Pancreas (tissue), 10 donors: ENCODE measurements at regions of chr17 and their contacts with region 1.

Region 1: GRCh38 chr17:77542551-77543490 is 402.1 kb downstream of the SEC14L1 start:
- DNase-seq: peak; percentile 38 to 79 (median 60)
- ATAC-seq: peak; percentile 68 to 98 (median 96)
- H3K4me3 ChIP-seq: no peak overlapping the region
- H3K27ac ChIP-seq: no peak overlapping the region
- H3K4me1 ChIP-seq: no peaks in the 10 kb centered on the region
- H3K27me3 ChIP-seq: peaks cover 0 to 17% (median 0%) of the 10 kb centered on the region in 4 donors
- CTCF ChIP-seq: peak; percentile 34 to 74 (median 61)

Region 2: DNA sequence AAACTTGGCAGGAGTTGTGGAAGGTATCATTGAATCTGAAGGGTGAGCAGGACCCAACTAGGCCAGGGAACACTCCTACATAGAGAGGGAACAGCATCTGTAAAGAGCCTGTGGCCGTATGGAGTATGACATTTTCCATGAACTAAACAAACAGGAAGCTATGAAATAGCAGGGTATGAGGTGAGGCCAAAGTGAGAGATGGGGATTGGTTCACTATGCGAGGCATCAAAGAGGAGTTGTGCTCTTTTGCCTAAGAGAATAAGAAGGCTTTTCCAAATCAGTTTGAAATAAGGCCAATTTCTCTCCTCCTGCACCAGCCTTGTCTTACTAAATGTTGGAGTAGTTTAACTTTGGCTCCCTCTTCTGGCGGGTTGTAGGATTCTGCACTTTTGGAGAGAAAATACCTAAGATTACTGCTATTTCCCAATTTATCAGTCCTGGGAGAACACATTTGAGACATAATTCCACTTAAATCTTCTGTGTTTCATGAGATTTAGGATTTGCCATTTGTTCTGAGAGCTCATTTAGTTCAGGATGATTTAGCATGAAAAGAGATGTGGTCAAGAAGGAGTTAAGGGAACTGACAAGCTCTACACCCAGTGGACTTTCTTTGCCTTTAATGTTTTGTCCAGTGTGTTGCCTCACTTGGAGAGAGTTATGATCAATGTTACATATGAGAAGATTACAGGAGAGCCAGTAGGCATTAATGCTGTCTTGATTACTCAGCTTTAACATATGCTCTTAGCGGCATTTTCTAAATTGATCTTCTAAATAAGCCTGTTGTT is 471.1 kb after region 1 on chr17:
- intact Hi-C with region 1: loop called in 2 of 3 experiments (anchors 5 to 10 kb)
- DNase-seq: peak in 2 of 6 donors; percentile 26 to 51
- ATAC-seq: peak; percentile 46 to 88 (median 76)
- H3K4me3 ChIP-seq: no peak overlapping the region
- H3K27ac ChIP-seq: no peak overlapping the region
- H3K4me1 ChIP-seq: no peaks in the 10 kb centered on the region
- H3K27me3 ChIP-seq: no peaks in the 10 kb centered on the region
- CTCF ChIP-seq: peak; percentile 34 to 50 (median 41)